Naive thymus-derived CD8-positive, alpha-beta T cell (primary cell): ENCODE measurements at regions of chr19 and their contacts with region 1.

Region 1: DNA sequence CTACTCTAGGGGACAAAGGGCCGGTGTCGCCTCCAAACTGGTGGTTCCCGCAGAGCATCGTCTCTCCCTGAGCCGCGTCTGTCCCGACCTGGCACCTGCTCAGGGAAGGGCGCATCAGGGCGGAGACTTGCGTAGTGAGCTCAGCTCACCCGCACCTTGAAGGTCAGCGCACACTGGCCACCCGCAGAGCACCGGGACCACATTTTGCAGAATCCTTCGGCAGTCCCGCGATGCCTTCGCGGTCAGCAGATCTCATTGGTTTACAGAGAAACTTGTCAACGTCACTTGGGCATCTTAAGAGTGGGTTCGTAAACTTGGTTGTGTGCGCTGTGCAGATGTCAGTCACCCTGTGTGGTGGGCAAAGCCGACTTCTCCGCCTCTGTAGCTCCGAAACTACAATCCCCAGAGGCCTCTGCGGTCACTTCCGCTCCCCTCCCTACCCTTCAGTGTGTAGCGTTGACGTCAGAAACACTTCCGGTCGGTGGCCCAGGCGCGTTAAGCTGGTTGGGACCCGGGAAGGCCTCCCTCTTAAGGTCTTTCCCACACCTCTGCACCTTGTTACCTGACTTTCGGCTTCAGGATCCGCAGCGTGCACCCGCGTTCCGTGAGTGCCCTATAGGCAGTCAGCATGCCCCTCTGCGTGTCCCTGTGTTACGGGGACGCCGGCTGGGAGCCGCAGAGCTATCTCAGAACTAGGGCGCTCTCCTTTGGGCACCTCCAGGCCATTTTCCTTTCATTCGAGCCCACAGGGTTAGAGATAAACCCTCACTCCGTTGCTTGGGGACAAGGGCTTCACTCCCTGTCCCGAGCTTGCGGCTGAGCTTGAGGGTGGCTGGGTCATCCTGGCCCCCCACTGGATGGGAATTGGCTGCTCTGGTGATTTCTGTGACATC is 36.5 kb upstream of the ZNF527 start:
- DNase-seq: peak; percentile 72 to 97 (median 90)
- ATAC-seq: peak; percentile 97 to 98
- H3K4me3 Mint-ChIP-seq: peak overlapping the region; percentile 84 to 97 (median 90)
- H3K27ac Mint-ChIP-seq: peak overlapping the region; percentile 79 to 98 (median 95)
- H3K4me1 Mint-ChIP-seq: peaks cover 9 to 34% (median 27%) of the 10 kb centered on the region in 4 donors
- H3K27me3 Mint-ChIP-seq: no peaks in the 10 kb centered on the region

Region 2: DNA sequence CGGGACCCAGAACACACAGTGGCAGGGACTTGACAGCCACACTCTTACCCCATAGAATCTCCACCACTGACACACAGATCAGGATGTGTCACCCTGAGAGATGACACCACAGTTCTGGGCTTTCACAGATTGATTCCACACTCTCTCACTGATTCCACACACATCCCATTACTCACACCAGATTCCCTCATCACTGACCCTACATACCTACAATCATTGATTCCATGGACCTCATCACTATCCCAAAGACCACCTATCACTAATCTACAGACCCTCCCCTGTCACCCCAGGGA is 21.1 kb before region 1 on chr19:
- POLR2A ChIA-PET with region 1: interaction called, 16 read pairs
- DNase-seq: no peak
- ATAC-seq: no peak
- H3K4me3 Mint-ChIP-seq: peak overlapping the region; percentile 39 to 90 (median 85)
- H3K27ac Mint-ChIP-seq: peak overlapping the region; percentile 29 to 94 (median 84)
- H3K4me1 Mint-ChIP-seq: peaks cover 10 to 24% (median 19%) of the 10 kb centered on the region in 4 donors
- H3K27me3 Mint-ChIP-seq: peaks cover 0 to 19% (median 10%) of the 10 kb centered on the region in 5 donors